Activated naive CD4-positive, alpha-beta T cell treated with anti-CD3 and anti-CD28 coated beads for 36 hours (primary cell): ENCODE measurements at regions of chr19 and their contacts with region 1.

Region 1: DNA sequence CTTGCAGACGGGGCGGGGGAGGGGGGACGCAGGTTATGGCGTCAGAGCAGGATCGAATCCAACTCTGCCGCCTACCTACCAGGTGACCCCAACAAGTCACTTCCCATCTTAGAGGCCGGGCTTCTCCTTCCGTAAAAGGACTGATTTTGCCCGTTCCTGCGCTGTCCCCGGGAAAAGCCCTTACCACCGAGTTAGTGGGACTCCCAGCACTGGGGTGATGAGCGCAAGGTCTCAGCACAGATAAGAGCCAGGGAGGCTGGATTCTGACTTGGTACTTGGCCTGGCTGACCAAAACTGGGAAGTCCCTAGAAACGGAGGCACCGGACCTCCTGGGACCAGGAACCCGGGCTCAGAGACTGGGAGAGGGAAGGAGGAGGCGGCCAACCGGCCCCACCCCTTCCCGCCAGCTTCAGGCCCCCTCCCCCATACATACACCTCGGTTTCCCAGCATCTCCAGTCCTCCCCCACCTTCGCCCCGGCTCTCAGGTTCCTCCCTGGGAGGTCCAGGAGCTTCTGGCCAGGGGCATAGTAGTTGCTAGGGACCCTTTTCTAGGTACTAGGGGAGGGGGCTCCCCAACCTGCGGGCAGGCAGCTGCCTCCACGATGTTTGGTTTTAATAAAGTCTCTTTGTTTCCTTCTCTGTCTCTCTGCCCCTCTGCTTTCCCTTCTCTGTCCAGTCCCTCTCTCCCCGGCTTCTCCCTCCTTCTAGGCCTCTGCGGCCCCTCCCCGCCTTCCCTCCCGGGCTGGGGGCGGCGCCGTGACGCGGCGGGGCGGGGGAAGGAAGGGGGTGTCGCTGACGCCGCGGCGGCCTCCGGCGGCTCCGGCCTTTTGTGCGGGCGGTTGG is at the start of gene GRAMD1A:
- DNase-seq: peak; percentile 80
- H3K4me3 Mint-ChIP-seq: peak within 1 kb of the TSS; percentile 98
- H3K27ac Mint-ChIP-seq: peak within 1 kb of the TSS; percentile 96
- H3K4me1 Mint-ChIP-seq: peaks cover 57% of the 10 kb centered on the region
- H3K27me3 Mint-ChIP-seq: no peaks in the 10 kb centered on the region
- total RNA-seq, gene GRAMD1A: 117 to 125 TPM

Region 2: DNA sequence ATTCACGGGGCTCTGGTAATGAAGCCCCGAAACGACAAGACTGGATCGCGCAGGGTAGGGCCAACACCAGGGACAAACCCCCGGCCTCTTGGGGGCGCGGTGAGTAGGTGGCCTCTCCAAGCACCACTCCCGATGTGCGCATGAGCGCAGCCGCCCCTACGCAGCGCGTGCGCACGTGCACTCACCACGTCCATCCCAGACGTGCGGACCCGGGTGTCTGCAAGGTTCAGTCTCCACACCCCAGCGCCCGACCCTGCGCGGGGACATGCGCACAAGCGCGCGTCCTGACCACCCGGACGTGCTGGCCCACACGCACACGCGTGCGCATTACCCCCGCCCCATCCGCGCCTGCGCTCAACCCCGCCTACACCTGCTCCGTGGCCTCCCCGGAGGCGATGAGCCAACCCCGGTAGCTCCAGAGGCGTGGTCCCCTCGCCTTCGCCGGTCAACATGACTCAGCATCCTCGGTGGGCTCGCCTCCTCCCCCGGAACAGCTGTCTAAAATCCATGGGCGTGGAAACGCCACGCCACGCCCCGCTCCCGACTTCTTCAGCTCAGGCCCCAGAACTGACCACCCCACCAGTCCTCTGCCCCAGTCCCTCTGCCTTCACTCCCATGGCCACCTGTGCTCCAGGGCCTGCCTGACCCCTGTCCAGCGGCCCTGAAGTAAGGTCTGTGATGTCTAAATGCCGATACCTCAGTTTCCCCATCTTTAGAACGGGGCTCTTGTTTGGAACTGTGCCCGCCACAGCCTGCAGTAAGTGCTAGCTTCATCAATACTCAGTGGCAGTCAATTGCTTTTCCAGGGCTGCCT is 640.4 kb before region 1 on chr19:
- CTCF ChIA-PET with region 1: no interaction called
- intact Hi-C with region 1: loop called (anchors 1 kb)
- DNase-seq: peak; percentile 96
- H3K4me3 Mint-ChIP-seq: peak overlapping the region; percentile 80
- H3K27ac Mint-ChIP-seq: peak overlapping the region; percentile 93
- H3K4me1 Mint-ChIP-seq: peaks cover 35% of the 10 kb centered on the region
- H3K27me3 Mint-ChIP-seq: no peaks in the 10 kb centered on the region

Region 3: GRCh38 chr19:34677386-34678084 is 322.2 kb before region 1 on chr19 and contains the start of gene ZNF302:
- CTCF ChIA-PET with region 1: no interaction called
- intact Hi-C with region 1: loop called (anchors 5 kb)
- DNase-seq: peak; percentile 98
- H3K4me3 Mint-ChIP-seq: peak within 1 kb of the TSS; percentile 97
- H3K27ac Mint-ChIP-seq: peak within 1 kb of the TSS; percentile 99
- H3K4me1 Mint-ChIP-seq: peaks cover 26% of the 10 kb centered on the region
- H3K27me3 Mint-ChIP-seq: no peaks in the 10 kb centered on the region
- total RNA-seq, gene ZNF302: 13.1 to 13.6 TPM

Region 4: GRCh38 chr19:34974646-34975045 is 25.1 kb before region 1 on chr19:
- CTCF ChIA-PET with region 1: interaction called, 25 read pairs
- intact Hi-C with region 1: loop called (anchors 1 kb)
- DNase-seq: no peak
- H3K4me3 Mint-ChIP-seq: no peak overlapping the region
- H3K27ac Mint-ChIP-seq: no peak overlapping the region
- H3K4me1 Mint-ChIP-seq: peaks cover 24% of the 10 kb centered on the region
- H3K27me3 Mint-ChIP-seq: no peaks in the 10 kb centered on the region

Region 5: GRCh38 chr19:35013031-35013819 is 13.5 kb after region 1 on chr19:
- CTCF ChIA-PET with region 1: interaction called, 13 read pairs
- intact Hi-C with region 1: loop called (anchors 1 kb)
- DNase-seq: peak; percentile 87
- H3K4me3 Mint-ChIP-seq: peak overlapping the region; percentile 60
- H3K27ac Mint-ChIP-seq: peak overlapping the region; percentile 90
- H3K4me1 Mint-ChIP-seq: peaks cover 57% of the 10 kb centered on the region
- H3K27me3 Mint-ChIP-seq: no peaks in the 10 kb centered on the region

Region 6: DNA sequence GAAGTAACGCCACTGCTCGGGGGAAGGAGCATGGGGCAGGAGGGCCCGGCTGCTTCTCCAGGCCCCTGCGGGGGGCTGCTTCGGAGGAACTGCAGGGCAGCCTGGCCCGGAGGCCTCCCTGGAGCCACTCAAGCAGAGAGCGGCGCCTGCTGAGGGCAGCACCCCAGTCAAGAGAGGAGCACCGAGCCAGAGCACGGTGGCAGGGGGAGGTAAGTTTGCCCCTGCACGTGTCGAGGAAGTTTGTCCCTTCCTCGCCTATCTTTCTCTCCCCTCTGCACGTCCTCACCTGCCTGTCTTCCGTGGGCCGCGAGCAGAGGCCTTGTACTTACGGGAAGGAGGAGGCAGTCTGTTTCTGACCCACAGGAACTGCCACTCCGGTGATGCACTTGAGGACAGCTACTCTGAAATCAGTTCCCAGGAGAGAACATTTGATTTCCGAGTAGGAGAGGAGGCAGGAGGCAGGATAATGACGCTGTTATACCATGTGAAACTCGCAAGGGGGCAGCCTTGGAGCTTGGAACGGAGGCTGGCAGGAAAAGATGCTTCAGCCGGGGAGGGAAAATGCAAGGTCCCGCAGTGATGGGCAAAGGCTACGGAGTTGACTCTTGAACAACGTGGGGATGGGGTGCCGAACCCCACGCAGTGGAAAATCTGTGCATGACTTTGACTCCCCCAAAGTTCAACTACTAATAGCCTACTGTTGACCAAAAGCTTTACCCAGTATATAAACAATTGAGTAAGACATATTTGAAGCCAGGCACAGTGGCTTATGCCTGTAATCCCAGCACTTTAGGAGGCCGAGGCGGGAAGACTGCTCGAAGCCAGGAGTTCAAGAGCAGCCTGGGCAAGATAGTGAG is 353.0 kb after region 1 on chr19:
- CTCF ChIA-PET with region 1: no interaction called
- intact Hi-C with region 1: no loop called
- DNase-seq: peak; percentile 85
- H3K4me3 Mint-ChIP-seq: no peak overlapping the region
- H3K27ac Mint-ChIP-seq: no peak overlapping the region
- H3K4me1 Mint-ChIP-seq: peaks cover 22% of the 10 kb centered on the region
- H3K27me3 Mint-ChIP-seq: no peaks in the 10 kb centered on the region